IMR-90 (cell line): ENCODE measurements at regions of chr9 and their contacts with region 1.

Region 1: GRCh38 chr9:129610473-129611301 is 10.2 kb downstream of the C9orf50 start:
- DNase-seq: peak; percentile 58
- ATAC-seq: peak; percentile 84
- H3K4me3 ChIP-seq: peak overlapping the region; percentile 70
- H3K27ac ChIP-seq: peak overlapping the region; percentile 98
- H3K4me1 ChIP-seq: peaks cover 16% of the 10 kb centered on the region
- H3K27me3 ChIP-seq: no peaks in the 10 kb centered on the region
- CTCF ChIP-seq: peak; percentile 94
- POLR2A ChIP-seq: peak; percentile 40; the same call in 1 of the 2 replicates
- RAD21 ChIP-seq: peak; percentile 99

Region 2: GRCh38 chr9:129006328-129007034 is 604.2 kb before region 1 on chr9:
- CTCF ChIA-PET with region 1: no interaction called
- POLR2A ChIA-PET with region 1: no interaction called
- dilution Hi-C with region 1: no loop called
- in situ Hi-C with region 1: no loop called
- intact Hi-C with region 1: loop called (anchors 2 kb)
- DNase-seq: peak; percentile 65
- ATAC-seq: peak; percentile 95
- H3K4me3 ChIP-seq: no peak overlapping the region
- H3K27ac ChIP-seq: no peak overlapping the region
- H3K4me1 ChIP-seq: no peaks in the 10 kb centered on the region
- H3K27me3 ChIP-seq: no peaks in the 10 kb centered on the region
- CTCF ChIP-seq: peak; percentile 97
- POLR2A ChIP-seq: no peak
- RAD21 ChIP-seq: peak; percentile 58

Region 3: GRCh38 chr9:129131300-129132145 is 479.2 kb before region 1 on chr9:
- CTCF ChIA-PET with region 1: interaction called, 3 read pairs
- POLR2A ChIA-PET with region 1: no interaction called
- dilution Hi-C with region 1: no loop called
- in situ Hi-C with region 1: loop called (anchors 5 kb)
- intact Hi-C with region 1: loop called (anchors 1 kb)
- DNase-seq: peak; percentile 55
- ATAC-seq: peak; percentile 98
- H3K4me3 ChIP-seq: no peak overlapping the region
- H3K27ac ChIP-seq: no peak overlapping the region
- H3K4me1 ChIP-seq: no peaks in the 10 kb centered on the region
- H3K27me3 ChIP-seq: no peaks in the 10 kb centered on the region
- CTCF ChIP-seq: peak; percentile 98
- POLR2A ChIP-seq: 0 out of 2 replicates have a peak, but pooled peaks have one; percentile 38
- RAD21 ChIP-seq: peak; percentile 98

Region 4: DNA sequence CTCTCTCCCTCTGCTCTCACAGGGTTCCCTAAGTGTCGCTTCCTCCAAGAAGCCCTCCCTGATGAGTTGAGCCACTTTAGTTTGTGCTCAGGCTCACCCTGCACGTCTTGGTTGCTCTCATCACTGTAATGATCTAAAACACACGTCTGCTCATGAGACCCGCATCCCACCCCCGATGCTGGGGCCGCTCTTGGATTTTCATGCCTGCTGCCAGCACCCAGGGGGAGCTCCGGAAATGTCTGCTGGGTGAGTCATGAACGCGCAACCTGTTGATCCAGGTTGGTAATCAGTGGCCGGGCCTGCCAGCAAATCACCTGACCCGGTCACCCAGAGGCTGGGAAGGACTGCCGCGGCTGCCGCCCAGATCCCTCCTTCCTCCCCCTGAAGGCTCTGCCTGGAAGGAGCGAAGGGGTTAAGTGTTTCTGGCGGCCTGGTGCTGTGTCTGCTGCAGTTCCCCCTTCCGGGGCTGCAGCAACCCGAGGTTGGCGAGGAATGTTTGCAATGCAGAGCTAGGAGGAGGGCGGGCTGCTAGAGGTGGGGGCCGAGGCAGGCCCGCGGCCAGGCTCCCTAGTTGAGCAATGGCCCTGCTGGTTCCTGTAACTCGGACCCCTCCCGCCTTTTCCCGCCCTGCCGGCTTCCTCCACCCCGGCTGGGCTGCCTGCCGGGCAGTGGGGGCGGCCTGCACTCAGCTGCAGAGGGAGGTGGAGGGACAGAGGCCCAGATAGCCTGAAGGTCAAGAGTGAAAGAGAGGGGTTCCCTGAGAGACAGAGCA is 276.5 kb before region 1 on chr9:
- CTCF ChIA-PET with region 1: interaction called, 4 read pairs
- POLR2A ChIA-PET with region 1: no interaction called
- dilution Hi-C with region 1: no loop called
- in situ Hi-C with region 1: loop called (anchors 10 kb)
- intact Hi-C with region 1: loop called (anchors 5 kb)
- DNase-seq: peak; percentile 92
- ATAC-seq: peak; percentile 92
- H3K4me3 ChIP-seq: no peak overlapping the region
- H3K27ac ChIP-seq: peak overlapping the region; percentile 91
- H3K4me1 ChIP-seq: peaks cover 38% of the 10 kb centered on the region
- H3K27me3 ChIP-seq: no peaks in the 10 kb centered on the region
- CTCF ChIP-seq: 0 out of 2 replicates have a peak, but pooled peaks have one; percentile 9
- POLR2A ChIP-seq: no peak
- RAD21 ChIP-seq: peak; percentile 27

Region 5: GRCh38 chr9:129460323-129461261 is 150.1 kb before region 1 on chr9:
- CTCF ChIA-PET with region 1: interaction called, 3 read pairs
- POLR2A ChIA-PET with region 1: no interaction called
- dilution Hi-C with region 1: no loop called
- in situ Hi-C with region 1: no loop called
- intact Hi-C with region 1: loop called (anchors 1 kb)
- DNase-seq: peak; percentile 98
- ATAC-seq: peak; percentile 90
- H3K4me3 ChIP-seq: peak overlapping the region; percentile 25
- H3K27ac ChIP-seq: peak overlapping the region; percentile 99
- H3K4me1 ChIP-seq: peaks cover 36% of the 10 kb centered on the region
- H3K27me3 ChIP-seq: no peaks in the 10 kb centered on the region
- CTCF ChIP-seq: peak; percentile 39
- POLR2A ChIP-seq: peak; percentile 90
- RAD21 ChIP-seq: peak; percentile 47

Region 6: GRCh38 chr9:129487642-129488409 is 122.9 kb before region 1 on chr9:
- CTCF ChIA-PET with region 1: no interaction called
- POLR2A ChIA-PET with region 1: no interaction called
- dilution Hi-C with region 1: no loop called
- in situ Hi-C with region 1: no loop called
- intact Hi-C with region 1: loop called (anchors 2 kb)
- DNase-seq: peak; percentile 65
- ATAC-seq: peak; percentile 6
- H3K4me3 ChIP-seq: peak overlapping the region; percentile 23
- H3K27ac ChIP-seq: peak overlapping the region; percentile 99
- H3K4me1 ChIP-seq: peaks cover 66% of the 10 kb centered on the region
- H3K27me3 ChIP-seq: no peaks in the 10 kb centered on the region
- CTCF ChIP-seq: no peak
- POLR2A ChIP-seq: peak; percentile 11; the same call in 1 of the 2 replicates
- RAD21 ChIP-seq: no peak

Region 7: DNA sequence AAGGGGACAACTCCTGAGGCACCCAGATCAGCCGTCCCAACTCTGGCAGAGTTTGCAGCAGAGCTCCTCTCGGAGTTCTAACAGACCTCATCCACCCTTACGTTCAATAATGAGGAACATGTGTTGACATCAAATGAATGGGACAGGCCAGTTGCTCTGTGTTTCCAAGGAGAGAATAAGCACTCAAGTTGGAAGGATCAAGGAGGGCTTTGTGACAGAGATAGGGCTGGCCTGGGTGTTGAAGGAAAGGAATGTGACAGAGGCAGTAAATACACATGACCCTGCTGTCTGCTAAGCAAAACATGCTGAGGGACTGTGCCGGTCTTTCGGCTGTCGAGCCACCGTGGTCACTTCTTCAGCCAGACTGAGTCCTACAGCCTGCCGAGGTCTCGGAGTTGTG is 491.2 kb after region 1 on chr9:
- CTCF ChIA-PET with region 1: no interaction called
- POLR2A ChIA-PET with region 1: no interaction called
- dilution Hi-C with region 1: no loop called
- in situ Hi-C with region 1: no loop called
- intact Hi-C with region 1: no loop called
- DNase-seq: no peak
- ATAC-seq: no peak
- H3K4me3 ChIP-seq: no peak overlapping the region
- H3K27ac ChIP-seq: no peak overlapping the region
- H3K4me1 ChIP-seq: peaks cover 4% of the 10 kb centered on the region
- H3K27me3 ChIP-seq: no peaks in the 10 kb centered on the region
- CTCF ChIP-seq: no peak
- POLR2A ChIP-seq: no peak
- RAD21 ChIP-seq: no peak